ENCODE measurements at regions of chr6 and their contacts with region 1.

Region 1: DNA sequence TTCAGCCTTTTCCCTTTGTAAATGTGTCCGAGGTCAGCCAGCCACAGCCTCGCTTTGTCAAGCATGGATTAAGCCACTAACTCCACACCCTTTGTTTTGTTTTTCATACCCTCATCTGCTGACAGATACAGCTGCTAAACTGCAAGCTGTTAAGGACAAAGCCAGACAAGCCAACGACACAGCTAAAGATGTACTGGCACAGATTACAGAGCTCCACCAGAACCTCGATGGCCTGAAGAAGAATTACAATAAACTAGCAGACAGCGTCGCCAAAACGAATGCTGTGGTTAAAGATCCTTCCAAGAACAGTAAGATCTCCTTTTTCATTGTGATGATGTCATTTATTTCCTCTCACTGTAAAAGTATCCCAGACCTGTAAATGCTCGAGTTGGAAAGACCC is 269.3 kb downstream of the ARHGAP18 start:
- DNase-seq: no peak
- H3K4me3 ChIP-seq: no peak overlapping the region
- H3K27ac ChIP-seq: no peak overlapping the region
- H3K4me1 ChIP-seq: no peaks in the 10 kb centered on the region
- H3K27me3 ChIP-seq: no peaks in the 10 kb centered on the region
- CTCF ChIP-seq: no peak
- POLR2A ChIP-seq: no peak

Region 2: GRCh38 chr6:129785047-129785755 is 344.5 kb after region 1 on chr6:
- intact Hi-C with region 1: loop called (anchors 5 kb)
- DNase-seq: no peak
- H3K4me3 ChIP-seq: no peak overlapping the region
- H3K27ac ChIP-seq: no peak overlapping the region
- H3K4me1 ChIP-seq: no peaks in the 10 kb centered on the region
- H3K27me3 ChIP-seq: no peaks in the 10 kb centered on the region
- CTCF ChIP-seq: no peak
- POLR2A ChIP-seq: no peak